H1 (cell line): ENCODE measurements at regions of chr1 and their contacts with region 1.

Region 1: GRCh38 chr1:47569681-47570470 is 132.0 kb downstream of the FOXD2 start:
- DNase-seq: no peak
- H3K4me3 ChIP-seq: no peak overlapping the region
- H3K27ac ChIP-seq: no peak overlapping the region
- H3K4me1 ChIP-seq: peaks cover 6 to 21% (median 16%) of the 10 kb centered on the region in 4 experiments
- H3K27me3 ChIP-seq: peaks cover 0 to 3% (median 2%) of the 10 kb centered on the region in 4 experiments; a peak in 2 of 7 replicates
- CTCF ChIP-seq: peak in 2 of 3 experiments; percentile 38 to 54; a peak in 3 of 4 replicates
- EP300 ChIP-seq: no peak
- POLR2A ChIP-seq: no peak
- RAD21 ChIP-seq: peak in 1 of 2 experiments; percentile 46; a peak in 3 of 4 replicates

Region 2: DNA sequence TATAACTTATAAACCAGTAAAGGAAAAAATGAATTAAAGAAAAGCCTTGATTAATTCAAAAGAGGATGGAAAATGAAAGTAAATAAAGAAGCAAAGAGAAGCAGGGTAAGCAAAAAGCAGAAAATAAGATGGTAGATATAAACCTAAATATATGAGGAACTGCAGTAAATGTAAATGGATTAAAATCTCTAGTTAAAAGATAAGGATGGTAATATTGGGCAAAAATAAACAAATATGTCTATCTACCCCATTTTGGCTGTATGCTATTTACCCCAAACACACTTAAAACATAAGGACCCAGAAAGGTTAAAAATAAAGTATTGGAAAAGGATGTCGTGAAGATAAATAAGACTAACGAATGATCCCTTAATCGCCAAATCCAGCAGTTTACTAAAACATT is 29.9 kb after region 1 on chr1:
- CTCF ChIA-PET with region 1: no interaction called
- POLR2A ChIA-PET with region 1: no interaction called
- DNase-seq: no peak
- H3K4me3 ChIP-seq: no peak overlapping the region
- H3K27ac ChIP-seq: no peak overlapping the region
- H3K4me1 ChIP-seq: no peaks in the 10 kb centered on the region
- H3K27me3 ChIP-seq: peaks cover 0 to 2% (median 0%) of the 10 kb centered on the region in 4 experiments; a peak in 1 of 7 replicates
- CTCF ChIP-seq: no peak
- EP300 ChIP-seq: no peak
- POLR2A ChIP-seq: no peak
- RAD21 ChIP-seq: no peak

Region 3: DNA sequence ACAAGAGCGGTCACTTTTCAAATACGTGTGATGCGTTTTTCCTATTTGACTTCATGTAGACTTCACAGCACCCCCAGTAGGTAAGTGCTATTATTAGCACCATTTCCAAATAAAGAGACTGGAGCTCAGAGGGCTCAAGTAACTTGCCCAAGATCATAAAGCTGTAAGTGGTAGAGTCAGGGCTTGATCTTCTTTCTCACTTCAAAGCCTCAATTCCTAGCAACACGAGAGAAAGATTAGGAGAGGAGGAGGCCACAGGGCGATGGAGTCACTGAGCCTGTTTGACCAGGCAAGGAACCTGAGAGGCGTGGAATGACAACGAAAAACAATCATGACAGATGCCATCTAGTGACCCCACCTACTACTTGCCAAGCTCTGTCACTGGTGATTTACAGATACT is 49.0 kb after region 1 on chr1:
- CTCF ChIA-PET with region 1: interaction called, 10 read pairs
- POLR2A ChIA-PET with region 1: no interaction called
- DNase-seq: peak in 1 of 2 experiments; percentile 28
- H3K4me3 ChIP-seq: no peak overlapping the region
- H3K27ac ChIP-seq: no peak overlapping the region
- H3K4me1 ChIP-seq: no peaks in the 10 kb centered on the region
- H3K27me3 ChIP-seq: no peaks in the 10 kb centered on the region; a peak in 3 of 7 replicates
- CTCF ChIP-seq: no peak
- EP300 ChIP-seq: no peak
- POLR2A ChIP-seq: no peak
- RAD21 ChIP-seq: no peak

Region 4: GRCh38 chr1:47644212-47644573 is 74.3 kb after region 1 on chr1:
- CTCF ChIA-PET with region 1: no interaction called
- POLR2A ChIA-PET with region 1: no interaction called
- DNase-seq: no peak
- H3K4me3 ChIP-seq: no peak overlapping the region
- H3K27ac ChIP-seq: no peak overlapping the region
- H3K4me1 ChIP-seq: no peaks in the 10 kb centered on the region
- H3K27me3 ChIP-seq: peaks cover 0 to 3% (median 0%) of the 10 kb centered on the region in 4 experiments; a peak in 1 of 7 replicates
- CTCF ChIP-seq: no peak
- EP300 ChIP-seq: no peak
- POLR2A ChIP-seq: no peak
- RAD21 ChIP-seq: no peak